Activated CD4-positive, alpha-beta T cell treated with anti-CD3 and anti-CD28 coated beads, Interleukin-2, amount 10 ng/mL, durations not matched to agents 7 days and 5 days (primary cell): ENCODE measurements at regions of chr9 and their contacts with region 1.

Region 1: GRCh38 chr9:91101611-91102168 is 260.0 kb downstream of the AUH start:
- DNase-seq: peak; percentile 95
- H3K4me3 Mint-ChIP-seq: peak overlapping the region; percentile 57
- H3K27ac Mint-ChIP-seq: peak overlapping the region; percentile 79
- H3K4me1 Mint-ChIP-seq: peaks cover 56% of the 10 kb centered on the region
- H3K27me3 Mint-ChIP-seq: no peaks in the 10 kb centered on the region

Region 2: GRCh38 chr9:91089405-91090129 is 12.1 kb before region 1 on chr9:
- CTCF ChIA-PET with region 1: interaction called, 44 read pairs
- POLR2A ChIA-PET with region 1: no interaction called
- DNase-seq: peak; percentile 29
- H3K4me3 Mint-ChIP-seq: no peak overlapping the region
- H3K27ac Mint-ChIP-seq: peak overlapping the region; percentile 38
- H3K4me1 Mint-ChIP-seq: peaks cover 35% of the 10 kb centered on the region
- H3K27me3 Mint-ChIP-seq: no peaks in the 10 kb centered on the region

Region 3: GRCh38 chr9:91111876-91112275 is 10.2 kb after region 1 on chr9:
- CTCF ChIA-PET with region 1: interaction called, 14 read pairs
- POLR2A ChIA-PET with region 1: no interaction called
- DNase-seq: no peak
- H3K4me3 Mint-ChIP-seq: no peak overlapping the region
- H3K27ac Mint-ChIP-seq: no peak overlapping the region
- H3K4me1 Mint-ChIP-seq: peaks cover 28% of the 10 kb centered on the region
- H3K27me3 Mint-ChIP-seq: peaks cover 2% of the 10 kb centered on the region

Region 4: GRCh38 chr9:91122755-91123154 is 21.1 kb after region 1 on chr9:
- CTCF ChIA-PET with region 1: no interaction called
- POLR2A ChIA-PET with region 1: no interaction called
- DNase-seq: no peak
- H3K4me3 Mint-ChIP-seq: no peak overlapping the region
- H3K27ac Mint-ChIP-seq: no peak overlapping the region
- H3K4me1 Mint-ChIP-seq: peaks cover 10% of the 10 kb centered on the region
- H3K27me3 Mint-ChIP-seq: peaks cover 3% of the 10 kb centered on the region